ENCODE measurements at regions of chr2 and their contacts with region 1.

Region 1: GRCh38 chr2:200963124-200963917 is at the start of gene ORC2:
- DNase-seq: peak; percentile 97
- H3K4me3 Mint-ChIP-seq: peak within 1 kb of the TSS; percentile 90
- H3K27ac Mint-ChIP-seq: peak within 1 kb of the TSS; percentile 88
- H3K4me1 Mint-ChIP-seq: peaks cover 48% of the 10 kb centered on the region
- H3K27me3 Mint-ChIP-seq: no peaks in the 10 kb centered on the region
- CTCF ChIP-seq: peak; percentile 77
- total RNA-seq, gene ORC2: 38.8 and 49.6 TPM in 2 replicates

Region 2: GRCh38 chr2:201007561-201007998 is 44.3 kb after region 1 on chr2:
- CTCF ChIA-PET with region 1: interaction called, 3 read pairs
- intact Hi-C with region 1: loop called (anchors 2 kb)
- DNase-seq: peak; percentile 64
- H3K4me3 Mint-ChIP-seq: peak overlapping the region; percentile 26
- H3K27ac Mint-ChIP-seq: peak overlapping the region; percentile 74
- H3K4me1 Mint-ChIP-seq: peaks cover 24% of the 10 kb centered on the region
- H3K27me3 Mint-ChIP-seq: no peaks in the 10 kb centered on the region
- CTCF ChIP-seq: no peak

Measured in Calu3 (cell line).